Activated naive CD4-positive, alpha-beta T cell treated with anti-CD3 and anti-CD28 coated beads, Interleukin-2, amount 10 ng/mL, durations not matched to agents 7 days and 5 days (primary cell): ENCODE measurements at regions of chrX and their contacts with region 1.

Region 1: GRCh38 chrX:135185795-135186443 is 14.7 kb upstream of the CT55 start:
- DNase-seq: peak; percentile 32
- H3K4me3 Mint-ChIP-seq: no peak overlapping the region
- H3K27ac Mint-ChIP-seq: no peak overlapping the region
- H3K4me1 Mint-ChIP-seq: no peaks in the 10 kb centered on the region
- H3K27me3 Mint-ChIP-seq: peaks cover 9% of the 10 kb centered on the region

Region 2: DNA sequence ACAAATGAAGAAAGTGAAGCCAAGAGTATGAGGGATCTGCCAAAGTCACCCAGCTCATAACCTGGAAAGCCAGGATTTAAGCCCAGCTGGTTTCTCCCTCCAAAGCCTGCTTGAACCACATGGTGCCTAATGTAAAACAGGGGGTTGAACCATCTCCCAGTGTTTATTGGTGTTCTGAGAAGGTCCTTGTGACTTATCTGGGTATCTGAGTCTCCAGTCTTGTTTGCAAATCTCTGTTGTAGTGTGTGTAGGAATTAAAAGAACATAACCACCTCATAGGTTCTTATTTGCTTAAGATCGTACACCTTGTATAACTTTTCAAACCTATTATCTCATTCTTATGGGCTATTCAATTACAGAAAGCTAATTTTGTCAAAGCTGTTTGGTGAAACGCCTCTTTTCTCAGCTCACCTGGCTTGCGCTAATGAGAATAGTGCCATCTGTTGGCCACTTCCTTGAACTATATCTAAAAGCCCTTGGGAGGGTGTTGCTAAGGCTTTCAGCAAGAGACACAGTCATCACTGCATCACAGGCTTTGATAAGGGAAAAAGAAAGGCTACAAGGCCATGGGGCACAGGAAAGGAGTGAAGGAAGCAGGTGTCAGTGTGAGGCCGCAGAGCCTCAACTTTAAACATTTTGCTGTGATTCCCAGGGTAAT is 99.6 kb before region 1 on chrX:
- CTCF ChIA-PET with region 1: no interaction called
- DNase-seq: peak; percentile 46
- H3K4me3 Mint-ChIP-seq: no peak overlapping the region
- H3K27ac Mint-ChIP-seq: no peak overlapping the region
- H3K4me1 Mint-ChIP-seq: peaks cover 6% of the 10 kb centered on the region
- H3K27me3 Mint-ChIP-seq: peaks cover 5% of the 10 kb centered on the region

Region 3: GRCh38 chrX:135112096-135112729 is 73.7 kb before region 1 on chrX:
- CTCF ChIA-PET with region 1: interaction called, 26 read pairs
- DNase-seq: peak; percentile 45
- H3K4me3 Mint-ChIP-seq: no peak overlapping the region
- H3K27ac Mint-ChIP-seq: no peak overlapping the region
- H3K4me1 Mint-ChIP-seq: no peaks in the 10 kb centered on the region
- H3K27me3 Mint-ChIP-seq: peaks cover 20% of the 10 kb centered on the region

Region 4: DNA sequence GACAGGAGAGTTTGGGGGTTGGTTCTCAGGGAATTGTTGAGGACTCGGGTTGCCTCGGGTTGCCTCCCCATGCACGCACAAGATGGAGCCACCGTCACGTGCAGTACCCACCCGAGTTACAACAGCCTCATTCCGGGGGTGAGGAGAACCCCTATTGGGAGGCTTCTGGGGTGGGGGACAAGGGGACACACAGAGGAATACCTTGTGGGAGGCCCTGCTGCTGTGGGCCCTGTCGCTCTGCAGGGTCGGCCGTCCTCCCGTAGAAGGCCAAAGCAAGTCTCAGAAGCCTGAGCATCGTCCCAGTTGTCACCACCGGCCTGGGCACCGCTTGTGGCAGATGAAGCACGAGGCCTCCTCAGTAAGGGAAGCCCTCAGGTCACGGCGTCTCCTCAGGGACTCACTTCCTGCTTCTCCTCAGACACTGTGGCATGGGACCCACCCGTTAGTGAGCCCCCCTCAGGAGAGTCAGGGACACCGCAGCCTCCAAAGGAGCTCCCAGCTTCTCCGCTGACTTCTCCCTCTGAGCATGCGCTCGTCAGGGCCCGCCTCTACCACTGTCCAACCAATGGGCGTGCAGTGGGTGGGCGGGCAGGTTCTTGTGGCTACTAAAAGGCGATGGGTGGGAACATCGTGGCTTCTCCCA is 14.9 kb before region 1 on chrX and contains the start of gene CT55:
- CTCF ChIA-PET with region 1: no interaction called
- DNase-seq: no peak
- H3K4me3 Mint-ChIP-seq: no peak within 1 kb of the TSS
- H3K27ac Mint-ChIP-seq: no peak within 1 kb of the TSS
- H3K4me1 Mint-ChIP-seq: no peaks in the 10 kb centered on the region
- H3K27me3 Mint-ChIP-seq: peaks cover 4% of the 10 kb centered on the region